Activated B cell treated with CpG ODN at 0.5 μM for 24 hours (primary cell): ENCODE measurements at regions of chr12 and their contacts with region 1.

Region 1: DNA sequence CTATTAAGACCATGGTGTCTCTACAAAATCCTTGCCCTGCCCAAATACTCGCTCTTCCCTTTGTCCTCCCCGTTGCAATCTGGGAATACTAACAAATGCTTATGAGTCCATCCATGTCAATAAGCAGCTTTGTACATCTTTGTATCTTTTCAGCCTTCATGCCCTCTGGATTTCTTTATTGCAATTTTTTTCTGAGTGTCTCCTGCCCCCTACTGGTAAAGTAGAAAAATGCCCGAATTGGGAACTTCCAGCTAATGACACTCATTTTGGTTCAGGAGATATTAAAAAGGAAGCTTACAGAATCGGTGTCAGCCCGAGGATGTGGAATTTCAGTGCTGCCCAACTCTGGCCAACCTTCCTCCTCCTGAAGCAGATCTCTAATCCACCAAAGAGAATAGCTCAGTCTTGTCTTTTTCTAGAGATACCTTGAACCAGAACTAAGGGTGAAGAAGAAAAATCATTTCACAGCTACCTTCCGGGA is 46.0 kb downstream of the SH2B3 start:
- DNase-seq: no peak
- ATAC-seq: peak; percentile 62
- H3K4me3 Mint-ChIP-seq: no peak overlapping the region
- H3K27ac Mint-ChIP-seq: no peak overlapping the region
- H3K4me1 Mint-ChIP-seq: peaks cover 28% of the 10 kb centered on the region
- H3K27me3 Mint-ChIP-seq: no peaks in the 10 kb centered on the region
- CTCF ChIP-seq: peak; percentile 24

Region 2: GRCh38 chr12:111330800-111331752 is 120.6 kb before region 1 on chr12:
- CTCF ChIA-PET with region 1: interaction called, 32 read pairs
- POLR2A ChIA-PET with region 1: no interaction called
- intact Hi-C with region 1: loop called (anchors 1 kb)
- DNase-seq: no peak
- ATAC-seq: no peak
- H3K4me3 Mint-ChIP-seq: no peak overlapping the region
- H3K27ac Mint-ChIP-seq: no peak overlapping the region
- H3K4me1 Mint-ChIP-seq: no peaks in the 10 kb centered on the region
- H3K27me3 Mint-ChIP-seq: peaks cover 3% of the 10 kb centered on the region
- CTCF ChIP-seq: no peak

Region 3: DNA sequence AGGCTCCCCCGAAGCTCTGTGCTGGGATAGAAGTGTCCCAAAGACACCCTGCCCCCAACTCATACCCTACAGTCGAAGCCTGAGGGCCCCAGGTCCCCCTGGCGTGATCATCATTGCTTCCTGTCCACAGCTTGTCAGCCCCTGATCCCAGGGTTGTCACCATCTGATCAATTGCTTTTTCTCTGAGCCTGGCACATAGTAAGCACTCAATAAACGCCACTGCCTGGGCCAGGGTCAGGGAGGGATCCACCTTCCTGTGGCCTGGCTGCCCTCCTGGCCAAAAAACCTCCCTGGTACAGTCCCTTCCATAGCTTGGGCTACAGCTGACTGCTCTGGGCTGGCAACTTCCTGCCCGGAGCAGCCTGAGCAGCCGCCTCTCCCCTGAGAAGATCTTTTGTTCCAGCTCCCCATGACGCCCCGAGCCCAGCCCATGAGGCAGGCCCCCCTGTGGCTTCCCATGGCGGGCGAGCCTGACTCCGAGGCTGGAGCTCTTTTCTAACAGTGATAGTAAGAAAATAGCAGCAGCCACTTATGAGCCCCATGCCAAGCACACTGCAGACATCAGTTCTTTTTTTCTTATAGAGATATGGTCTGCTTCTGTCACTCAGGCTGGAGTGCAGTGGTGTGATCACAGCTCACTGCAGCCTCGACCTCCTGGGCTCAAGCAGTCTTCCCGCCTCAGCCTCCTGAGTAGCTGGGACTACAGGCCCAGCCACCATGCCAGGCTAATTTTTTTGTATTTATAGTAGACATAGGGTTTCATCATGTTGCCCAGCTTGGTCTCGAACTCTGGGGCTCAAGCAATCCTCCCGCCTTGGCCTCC is 39.5 kb before region 1 on chr12:
- CTCF ChIA-PET with region 1: interaction called, 28 read pairs
- POLR2A ChIA-PET with region 1: interaction called, 59 read pairs
- intact Hi-C with region 1: no loop called
- DNase-seq: no peak
- ATAC-seq: peak; percentile 23
- H3K4me3 Mint-ChIP-seq: peak overlapping the region; percentile 75
- H3K27ac Mint-ChIP-seq: peak overlapping the region; percentile 87
- H3K4me1 Mint-ChIP-seq: peaks cover 79% of the 10 kb centered on the region
- H3K27me3 Mint-ChIP-seq: no peaks in the 10 kb centered on the region
- CTCF ChIP-seq: no peak

Region 4: DNA sequence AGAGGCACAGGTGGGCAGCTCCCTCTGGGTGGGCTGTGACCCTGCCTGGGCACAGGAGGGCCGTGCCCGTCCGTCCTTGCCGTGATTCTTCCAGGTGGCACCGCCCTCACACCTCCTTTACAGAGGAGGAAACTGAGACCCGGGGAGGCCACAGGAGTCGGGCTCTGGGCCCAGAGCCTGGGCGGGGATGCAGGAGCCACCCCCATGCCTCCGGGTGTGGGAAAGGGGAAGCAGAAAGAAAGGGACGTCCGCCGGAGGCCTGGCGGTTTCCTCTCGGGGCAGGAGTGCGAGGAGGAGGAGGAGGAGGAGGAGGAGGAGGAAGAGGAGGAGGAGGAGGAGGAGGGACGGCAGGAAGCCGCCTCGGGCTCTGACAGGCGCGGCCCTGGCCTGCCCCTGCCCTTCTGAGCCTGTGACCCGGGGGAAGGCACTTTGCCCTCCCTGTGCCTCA is 22.9 kb before region 1 on chr12:
- CTCF ChIA-PET with region 1: interaction called, 28 read pairs
- POLR2A ChIA-PET with region 1: interaction called, 122 read pairs
- intact Hi-C with region 1: no loop called
- DNase-seq: no peak
- ATAC-seq: no peak
- H3K4me3 Mint-ChIP-seq: peak overlapping the region; percentile 65
- H3K27ac Mint-ChIP-seq: no peak overlapping the region
- H3K4me1 Mint-ChIP-seq: peaks cover 87% of the 10 kb centered on the region
- H3K27me3 Mint-ChIP-seq: no peaks in the 10 kb centered on the region
- CTCF ChIP-seq: no peak

Region 5: DNA sequence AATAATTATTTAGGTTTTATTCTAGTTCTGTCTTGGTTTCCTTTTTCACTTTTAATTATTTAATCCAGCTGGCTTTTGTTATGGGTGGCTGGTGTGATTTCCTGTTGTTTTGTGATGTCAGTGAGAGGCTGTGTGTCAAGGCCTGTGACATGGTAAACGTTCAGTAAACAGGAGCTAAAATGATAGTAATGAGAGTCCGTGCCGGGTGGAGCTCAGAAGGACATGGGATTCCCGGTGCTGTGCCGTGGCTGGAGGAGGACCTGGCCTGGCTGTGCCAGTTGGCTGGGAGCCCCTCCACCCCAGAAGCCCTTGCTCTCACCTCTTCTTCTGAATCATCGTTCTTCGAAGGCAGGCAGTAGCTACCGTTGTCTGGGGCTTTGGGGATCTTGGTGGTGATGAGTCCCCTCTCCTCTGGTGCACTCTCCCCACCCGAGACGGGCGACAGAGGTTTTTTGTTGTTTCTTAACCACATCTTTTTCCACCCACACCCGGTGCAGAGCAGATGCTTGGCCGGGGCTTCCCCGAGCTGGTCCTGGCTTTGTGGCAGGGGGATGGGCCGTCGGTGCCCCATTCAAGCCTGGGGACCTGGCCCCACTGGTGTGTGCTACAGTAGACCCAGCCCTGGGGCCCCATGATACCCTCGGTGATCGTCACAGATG is 16.9 kb before region 1 on chr12:
- CTCF ChIA-PET with region 1: interaction called, 28 read pairs
- POLR2A ChIA-PET with region 1: interaction called, 122 read pairs
- intact Hi-C with region 1: loop called (anchors 2 kb)
- DNase-seq: peak; percentile 75
- ATAC-seq: peak; percentile 80
- H3K4me3 Mint-ChIP-seq: peak overlapping the region; percentile 83
- H3K27ac Mint-ChIP-seq: peak overlapping the region; percentile 92
- H3K4me1 Mint-ChIP-seq: peaks cover 95% of the 10 kb centered on the region
- H3K27me3 Mint-ChIP-seq: no peaks in the 10 kb centered on the region
- CTCF ChIP-seq: no peak

Region 6: GRCh38 chr12:111462210-111462769 is 10.6 kb after region 1 on chr12:
- CTCF ChIA-PET with region 1: interaction called, 16 read pairs
- POLR2A ChIA-PET with region 1: no interaction called
- intact Hi-C with region 1: no loop called
- DNase-seq: no peak
- ATAC-seq: no peak
- H3K4me3 Mint-ChIP-seq: no peak overlapping the region
- H3K27ac Mint-ChIP-seq: peak overlapping the region; percentile 56
- H3K4me1 Mint-ChIP-seq: peaks cover 5% of the 10 kb centered on the region
- H3K27me3 Mint-ChIP-seq: no peaks in the 10 kb centered on the region
- CTCF ChIP-seq: no peak

Region 7: DNA sequence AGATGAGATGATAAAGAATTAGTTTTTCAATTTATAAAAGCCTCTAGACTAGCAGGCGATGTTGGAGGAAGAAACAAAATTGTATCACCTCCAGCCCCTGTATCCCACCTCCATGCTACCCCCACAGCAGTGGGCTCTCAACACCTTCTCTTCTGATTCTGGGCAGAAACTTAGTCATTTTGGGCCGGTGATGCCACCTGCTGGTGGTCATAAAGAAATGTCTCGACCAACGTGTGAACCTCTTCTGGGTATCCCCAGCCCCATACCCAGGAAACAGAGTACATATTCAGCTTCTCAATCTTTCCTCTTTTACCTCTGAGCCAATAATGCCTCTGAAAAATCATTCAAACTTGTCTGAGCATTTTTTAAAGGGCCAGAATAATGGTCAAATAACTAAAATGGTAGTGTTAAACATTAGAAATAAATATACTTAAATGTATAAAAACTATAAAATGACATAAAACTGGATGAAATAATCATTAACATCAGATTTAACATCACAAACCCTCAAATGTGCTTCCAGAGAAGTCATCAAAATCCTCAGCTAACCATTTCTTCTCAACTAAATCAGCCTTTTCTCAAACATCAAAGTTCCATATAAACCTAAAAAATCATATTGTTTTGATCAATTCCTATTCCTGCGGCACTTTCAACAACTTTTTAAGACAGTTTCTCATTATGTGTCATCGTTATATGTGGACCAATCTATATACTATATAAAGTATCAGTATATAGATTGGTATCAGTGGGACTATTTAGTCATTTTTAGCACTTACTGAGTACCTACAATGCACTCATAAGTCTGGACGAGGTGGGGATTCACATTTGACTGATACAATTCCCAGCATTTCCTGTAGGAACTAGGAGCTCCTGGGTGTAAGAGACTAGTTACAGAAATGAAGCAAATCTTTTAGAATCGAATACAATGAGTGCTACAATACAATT is 78.0 kb after region 1 on chr12:
- CTCF ChIA-PET with region 1: interaction called, 15 read pairs
- POLR2A ChIA-PET with region 1: no interaction called
- intact Hi-C with region 1: loop called (anchors 1 kb)
- DNase-seq: peak; percentile 41
- ATAC-seq: peak; percentile 86
- H3K4me3 Mint-ChIP-seq: no peak overlapping the region
- H3K27ac Mint-ChIP-seq: no peak overlapping the region
- H3K4me1 Mint-ChIP-seq: no peaks in the 10 kb centered on the region
- H3K27me3 Mint-ChIP-seq: no peaks in the 10 kb centered on the region
- CTCF ChIP-seq: no peak